CD4-positive, alpha-beta T cell (primary cell): ENCODE measurements at regions of chr3 and their contacts with region 1.

Region 1: GRCh38 chr3:184914628-184915027 is 102.7 kb downstream of the VPS8 start:
- DNase-seq: no peak
- ATAC-seq: no peak
- H3K4me3 ChIP-seq: no peak overlapping the region
- H3K4me3 Mint-ChIP-seq: no peak overlapping the region
- H3K27ac ChIP-seq: no peak overlapping the region
- H3K27ac Mint-ChIP-seq: no peak overlapping the region
- H3K4me1 ChIP-seq: no peaks in the 10 kb centered on the region
- H3K4me1 Mint-ChIP-seq: no peaks in the 10 kb centered on the region
- H3K27me3 ChIP-seq: no peaks in the 10 kb centered on the region
- H3K27me3 Mint-ChIP-seq: no peaks in the 10 kb centered on the region
- CTCF ChIP-seq: no peak

Region 2: DNA sequence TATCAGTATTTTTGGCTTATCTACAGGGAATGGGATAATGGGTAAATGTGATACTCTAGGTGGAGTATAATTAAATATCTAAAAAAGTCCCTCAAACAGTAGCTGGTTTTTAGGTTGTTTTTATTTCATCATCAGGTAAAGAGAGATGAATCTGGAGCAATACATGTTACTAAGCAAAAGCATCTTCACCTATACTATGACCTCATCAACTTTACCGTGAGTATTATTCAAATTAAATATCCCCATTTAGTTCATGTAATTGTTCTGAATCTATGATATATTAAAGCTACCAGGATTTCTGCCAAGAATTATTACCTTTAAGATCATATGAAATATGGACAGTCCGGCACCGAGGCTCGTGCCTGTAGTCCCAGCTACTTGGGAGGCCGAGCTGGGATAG is 54.8 kb before region 1 on chr3:
- CTCF ChIA-PET with region 1: no interaction called
- POLR2A ChIA-PET with region 1: no interaction called
- intact Hi-C with region 1: loop called in 1 of 2 experiments (anchors 5 kb)
- DNase-seq: no peak
- ATAC-seq: no peak
- H3K4me3 ChIP-seq: no peak overlapping the region
- H3K4me3 Mint-ChIP-seq: no peak overlapping the region
- H3K27ac ChIP-seq: no peak overlapping the region
- H3K27ac Mint-ChIP-seq: no peak overlapping the region
- H3K4me1 ChIP-seq: no peaks in the 10 kb centered on the region
- H3K4me1 Mint-ChIP-seq: no peaks in the 10 kb centered on the region
- H3K27me3 ChIP-seq: no peaks in the 10 kb centered on the region
- H3K27me3 Mint-ChIP-seq: no peaks in the 10 kb centered on the region
- CTCF ChIP-seq: no peak